Gastrocnemius medialis (tissue), 4 donors: ENCODE measurements at regions of chr18 and their contacts with region 1.

Region 1: GRCh38 chr18:70418546-70419311 is 129.9 kb downstream of the SOCS6 start:
- DNase-seq: no peak
- ATAC-seq: no peak
- H3K4me3 ChIP-seq: no peak overlapping the region
- H3K27ac ChIP-seq: no peak overlapping the region
- H3K4me1 ChIP-seq: peaks cover 12 to 27% of the 10 kb centered on the region in 2 donors
- H3K27me3 ChIP-seq: no peaks in the 10 kb centered on the region
- CTCF ChIP-seq: no peak
- POLR2A ChIP-seq: no peak

Region 2: GRCh38 chr18:70085641-70086040 is 333.1 kb before region 1 on chr18:
- in situ Hi-C with region 1: no loop called
- intact Hi-C with region 1: no loop called
- DNase-seq: no peak
- ATAC-seq: no peak
- H3K4me3 ChIP-seq: no peak overlapping the region
- H3K27ac ChIP-seq: no peak overlapping the region
- H3K4me1 ChIP-seq: no peaks in the 10 kb centered on the region
- H3K27me3 ChIP-seq: no peaks in the 10 kb centered on the region
- CTCF ChIP-seq: no peak
- POLR2A ChIP-seq: no peak

Region 3: GRCh38 chr18:70355620-70356385 is 62.9 kb before region 1 on chr18:
- in situ Hi-C with region 1: no loop called
- intact Hi-C with region 1: loop called (anchors 10 kb)
- DNase-seq: no peak
- ATAC-seq: no peak
- H3K4me3 ChIP-seq: no peak overlapping the region
- H3K27ac ChIP-seq: no peak overlapping the region
- H3K4me1 ChIP-seq: no peaks in the 10 kb centered on the region
- H3K27me3 ChIP-seq: no peaks in the 10 kb centered on the region
- CTCF ChIP-seq: no peak
- POLR2A ChIP-seq: no peak

Region 4: GRCh38 chr18:70506511-70506910 is 87.8 kb after region 1 on chr18:
- in situ Hi-C with region 1: no loop called
- intact Hi-C with region 1: no loop called
- DNase-seq: no peak
- ATAC-seq: no peak
- H3K4me3 ChIP-seq: no peak overlapping the region
- H3K27ac ChIP-seq: no peak overlapping the region
- H3K4me1 ChIP-seq: no peaks in the 10 kb centered on the region
- H3K27me3 ChIP-seq: peaks cover 0 to 3% (median 0%) of the 10 kb centered on the region in 3 donors
- CTCF ChIP-seq: no peak
- POLR2A ChIP-seq: no peak